Activated naive CD8-positive, alpha-beta T cell treated with anti-CD3 and anti-CD28 coated beads, Interleukin-2, amount 10 ng/mL, durations not matched to agents 7 days and 5 days (primary cell): ENCODE measurements at regions of chr1 and their contacts with region 1.

Region 1: GRCh38 chr1:156129706-156130581 is 15.4 kb downstream of the LMNA start:
- DNase-seq: peak; percentile 81
- ATAC-seq: no peak
- H3K4me3 Mint-ChIP-seq: no peak overlapping the region
- H3K27ac Mint-ChIP-seq: no peak overlapping the region
- H3K4me1 Mint-ChIP-seq: peaks cover 34% of the 10 kb centered on the region
- H3K27me3 Mint-ChIP-seq: peaks cover 18% of the 10 kb centered on the region

Region 2: DNA sequence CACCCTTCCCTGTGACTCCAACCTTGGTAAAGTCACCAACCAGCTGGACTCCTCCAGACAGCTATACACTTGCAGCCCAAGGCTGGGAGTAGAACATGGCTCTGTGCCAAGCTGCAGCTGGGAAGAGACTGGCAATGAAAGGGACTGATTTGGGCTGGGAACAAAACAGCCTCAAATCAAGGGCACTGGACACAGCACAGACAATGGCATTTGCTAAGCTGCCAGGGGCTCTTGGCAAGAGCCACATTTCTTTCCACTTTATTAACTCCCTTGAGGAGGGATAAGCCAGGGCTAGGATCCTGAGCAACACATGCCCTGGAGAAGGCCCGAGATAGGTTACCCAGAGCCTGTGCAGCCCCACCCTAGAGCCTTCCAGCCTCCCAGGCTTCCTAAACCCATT is 258.6 kb before region 1 on chr1:
- POLR2A ChIA-PET with region 1: no interaction called
- DNase-seq: no peak
- ATAC-seq: no peak
- H3K4me3 Mint-ChIP-seq: no peak overlapping the region
- H3K27ac Mint-ChIP-seq: peak overlapping the region; percentile 34
- H3K4me1 Mint-ChIP-seq: peaks cover 5% of the 10 kb centered on the region
- H3K27me3 Mint-ChIP-seq: no peaks in the 10 kb centered on the region

Region 3: GRCh38 chr1:156096640-156097391 is 33.1 kb before region 1 on chr1:
- POLR2A ChIA-PET with region 1: interaction called, 44 read pairs
- DNase-seq: peak; percentile 82
- ATAC-seq: peak; percentile 80
- H3K4me3 Mint-ChIP-seq: peak overlapping the region; percentile 31
- H3K27ac Mint-ChIP-seq: no peak overlapping the region
- H3K4me1 Mint-ChIP-seq: peaks cover 34% of the 10 kb centered on the region
- H3K27me3 Mint-ChIP-seq: peaks cover 56% of the 10 kb centered on the region

Region 4: GRCh38 chr1:156103521-156103947 is 26.4 kb before region 1 on chr1:
- POLR2A ChIA-PET with region 1: interaction called, 44 read pairs
- DNase-seq: no peak
- ATAC-seq: no peak
- H3K4me3 Mint-ChIP-seq: no peak overlapping the region
- H3K27ac Mint-ChIP-seq: no peak overlapping the region
- H3K4me1 Mint-ChIP-seq: peaks cover 21% of the 10 kb centered on the region
- H3K27me3 Mint-ChIP-seq: peaks cover 46% of the 10 kb centered on the region